Psoas muscle (tissue), 8 donors: ENCODE measurements at regions of chr2 and their contacts with region 1.

Region 1: DNA sequence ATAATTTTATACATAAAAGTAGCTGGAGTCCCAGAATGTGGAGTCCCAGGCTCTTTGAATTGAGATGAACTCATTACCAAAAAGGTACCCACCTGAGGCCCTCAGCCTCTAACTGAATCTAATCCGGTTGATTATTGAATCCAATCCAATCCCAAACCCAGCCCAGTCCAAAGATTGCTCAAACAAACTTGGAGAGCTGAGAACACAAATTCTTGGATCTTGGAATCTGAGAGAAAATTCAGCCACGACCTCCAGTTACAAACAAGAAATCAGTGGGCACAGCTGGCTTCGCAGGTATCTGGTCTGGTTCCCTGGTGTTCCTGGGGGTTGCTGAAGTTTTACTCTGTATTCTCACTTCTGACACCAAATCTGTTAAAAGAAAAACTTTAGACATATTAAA is 28.4 kb upstream of the RHOB start:
- DNase-seq: no peak
- ATAC-seq: no peak
- H3K4me3 ChIP-seq: no peak overlapping the region
- H3K27ac ChIP-seq: no peak overlapping the region
- H3K4me1 ChIP-seq: peaks cover 24% of the 10 kb centered on the region
- H3K27me3 ChIP-seq: peaks cover 0 to 6% (median 0%) of the 10 kb centered on the region in 3 donors
- CTCF ChIP-seq: no peak

Region 2: GRCh38 chr2:20456636-20457426 is 38.3 kb after region 1 on chr2:
- intact Hi-C with region 1: loop called in 1 of 2 experiments (anchors 1 kb)
- DNase-seq: no peak
- ATAC-seq: peak in 1 of 4 donors; percentile 36
- H3K4me3 ChIP-seq: no peak overlapping the region
- H3K27ac ChIP-seq: no peak overlapping the region
- H3K4me1 ChIP-seq: no peaks in the 10 kb centered on the region
- H3K27me3 ChIP-seq: no peaks in the 10 kb centered on the region
- CTCF ChIP-seq: no peak